ENCODE measurements at regions of chr1 and their contacts with region 1.

Region 1: GRCh38 chr1:167634435-167634834 is 4.4 kb downstream of the RCSD1 start:
- DNase-seq: no peak
- H3K4me3 Mint-ChIP-seq: peak overlapping the region; percentile 43
- H3K27ac Mint-ChIP-seq: peak overlapping the region; percentile 70
- H3K4me1 Mint-ChIP-seq: peaks cover 76% of the 10 kb centered on the region
- H3K27me3 Mint-ChIP-seq: no peaks in the 10 kb centered on the region

Region 2: GRCh38 chr1:167563579-167564246 is 70.7 kb before region 1 on chr1:
- CTCF ChIA-PET with region 1: no interaction called
- POLR2A ChIA-PET with region 1: no interaction called
- DNase-seq: no peak
- H3K4me3 Mint-ChIP-seq: no peak overlapping the region
- H3K27ac Mint-ChIP-seq: no peak overlapping the region
- H3K4me1 Mint-ChIP-seq: no peaks in the 10 kb centered on the region
- H3K27me3 Mint-ChIP-seq: peaks cover 8% of the 10 kb centered on the region

Region 3: GRCh38 chr1:167648252-167648849 is 13.9 kb after region 1 on chr1:
- CTCF ChIA-PET with region 1: interaction called, 10 read pairs
- POLR2A ChIA-PET with region 1: no interaction called
- DNase-seq: no peak
- H3K4me3 Mint-ChIP-seq: no peak overlapping the region
- H3K27ac Mint-ChIP-seq: peak overlapping the region; percentile 76
- H3K4me1 Mint-ChIP-seq: peaks cover 76% of the 10 kb centered on the region
- H3K27me3 Mint-ChIP-seq: no peaks in the 10 kb centered on the region

Region 4: DNA sequence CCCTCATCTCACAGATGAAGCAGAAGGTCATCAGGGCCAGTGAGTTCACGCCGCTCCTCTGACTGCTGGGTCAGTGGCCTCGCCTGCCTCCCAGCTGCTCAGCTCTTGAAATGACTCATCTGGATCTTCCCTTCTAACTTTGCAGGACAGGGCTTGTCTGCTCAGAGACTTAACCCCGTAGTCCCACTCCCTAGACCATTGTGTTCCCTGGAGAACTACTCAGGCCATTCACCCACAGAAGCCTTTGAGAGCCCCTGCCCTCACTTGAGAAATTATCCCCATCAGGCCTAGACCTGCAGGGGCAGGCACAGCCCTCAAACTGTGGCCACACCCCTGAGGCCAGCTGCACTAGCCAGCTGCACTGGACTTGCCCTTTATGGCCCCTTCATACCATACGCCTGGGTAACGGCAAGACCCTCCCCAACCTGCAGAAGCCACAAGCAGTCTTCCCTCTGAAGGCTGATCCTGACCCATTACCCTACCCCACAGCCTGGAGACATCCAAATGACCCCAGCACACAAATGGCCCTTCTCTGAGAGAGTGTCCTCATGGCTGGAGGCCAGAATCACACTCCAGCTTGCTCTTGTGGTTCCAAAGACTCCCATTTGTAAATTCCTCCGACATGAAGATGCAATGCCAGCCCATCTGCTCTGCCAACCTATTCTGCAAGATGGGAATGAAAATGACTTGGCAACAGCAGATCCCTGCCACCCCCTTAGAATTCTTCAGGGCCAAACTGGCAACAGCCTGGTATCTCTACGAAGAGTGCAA is 28.8 kb after region 1 on chr1:
- CTCF ChIA-PET with region 1: no interaction called
- POLR2A ChIA-PET with region 1: no interaction called
- DNase-seq: no peak
- H3K4me3 Mint-ChIP-seq: no peak overlapping the region
- H3K27ac Mint-ChIP-seq: no peak overlapping the region
- H3K4me1 Mint-ChIP-seq: peaks cover 36% of the 10 kb centered on the region
- H3K27me3 Mint-ChIP-seq: no peaks in the 10 kb centered on the region

Measured in activated CD4-positive, alpha-beta T cell treated with anti-CD3 and anti-CD28 coated beads, Interleukin-2, amount 10 ng/mL, durations not matched to agents 7 days and 5 days (primary cell).